ENCODE measurements at regions of chr14 and their contacts with region 1.

Region 1: DNA sequence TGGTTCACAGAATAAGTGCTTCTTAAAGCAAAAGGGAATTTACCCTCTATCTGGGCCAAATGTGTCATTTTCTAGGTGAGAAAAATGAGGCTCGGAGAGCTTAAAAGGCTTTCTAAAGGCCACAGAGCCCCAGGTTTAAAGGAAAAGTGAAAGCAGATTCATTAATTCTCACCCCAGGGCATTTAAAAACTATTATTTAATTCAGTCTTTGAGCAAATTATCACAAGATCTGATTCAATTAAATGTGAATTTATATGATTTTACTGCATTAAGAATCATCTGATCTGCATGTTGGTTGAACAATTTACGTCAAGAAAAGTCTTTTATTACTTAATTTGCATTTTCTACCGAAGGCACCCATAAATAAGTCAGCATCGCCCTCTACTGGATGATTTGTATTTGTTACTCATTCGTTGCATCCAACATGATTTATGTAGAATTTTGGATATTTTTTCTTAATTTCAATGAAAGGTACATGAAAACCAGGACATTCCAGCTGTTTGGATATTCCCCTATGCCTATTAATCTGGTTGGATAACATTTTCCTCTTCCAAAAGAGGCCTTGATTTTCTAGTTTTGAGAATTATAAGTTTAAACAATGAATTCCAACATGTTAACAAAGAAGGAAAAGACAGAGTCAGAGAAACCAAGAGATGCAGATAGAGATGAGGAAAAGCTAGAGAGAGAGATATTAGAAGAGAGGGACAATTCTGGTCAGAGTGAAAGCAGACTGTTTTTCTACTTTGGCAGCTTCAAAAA is 19.1 kb upstream of the DHRS7 start:
- DNase-seq: peak in 6 of 14 experiments; percentile 9 to 87 (median 62)
- ATAC-seq: peak; percentile 71
- H3K4me3 ChIP-seq: peak overlapping the region; percentile 52
- H3K4me3 Mint-ChIP-seq: peak overlapping the region; percentile 75
- H3K27ac ChIP-seq: peak overlapping the region in 1 of 2 donors; percentile 74
- H3K27ac Mint-ChIP-seq: peak overlapping the region; percentile 74
- H3K4me1 ChIP-seq: peaks cover 4% of the 10 kb centered on the region
- H3K4me1 Mint-ChIP-seq: peaks cover 11% of the 10 kb centered on the region
- H3K27me3 ChIP-seq: no peaks in the 10 kb centered on the region
- H3K27me3 Mint-ChIP-seq: no peaks in the 10 kb centered on the region
- CTCF ChIP-seq: peak; percentile 89

Region 2: DNA sequence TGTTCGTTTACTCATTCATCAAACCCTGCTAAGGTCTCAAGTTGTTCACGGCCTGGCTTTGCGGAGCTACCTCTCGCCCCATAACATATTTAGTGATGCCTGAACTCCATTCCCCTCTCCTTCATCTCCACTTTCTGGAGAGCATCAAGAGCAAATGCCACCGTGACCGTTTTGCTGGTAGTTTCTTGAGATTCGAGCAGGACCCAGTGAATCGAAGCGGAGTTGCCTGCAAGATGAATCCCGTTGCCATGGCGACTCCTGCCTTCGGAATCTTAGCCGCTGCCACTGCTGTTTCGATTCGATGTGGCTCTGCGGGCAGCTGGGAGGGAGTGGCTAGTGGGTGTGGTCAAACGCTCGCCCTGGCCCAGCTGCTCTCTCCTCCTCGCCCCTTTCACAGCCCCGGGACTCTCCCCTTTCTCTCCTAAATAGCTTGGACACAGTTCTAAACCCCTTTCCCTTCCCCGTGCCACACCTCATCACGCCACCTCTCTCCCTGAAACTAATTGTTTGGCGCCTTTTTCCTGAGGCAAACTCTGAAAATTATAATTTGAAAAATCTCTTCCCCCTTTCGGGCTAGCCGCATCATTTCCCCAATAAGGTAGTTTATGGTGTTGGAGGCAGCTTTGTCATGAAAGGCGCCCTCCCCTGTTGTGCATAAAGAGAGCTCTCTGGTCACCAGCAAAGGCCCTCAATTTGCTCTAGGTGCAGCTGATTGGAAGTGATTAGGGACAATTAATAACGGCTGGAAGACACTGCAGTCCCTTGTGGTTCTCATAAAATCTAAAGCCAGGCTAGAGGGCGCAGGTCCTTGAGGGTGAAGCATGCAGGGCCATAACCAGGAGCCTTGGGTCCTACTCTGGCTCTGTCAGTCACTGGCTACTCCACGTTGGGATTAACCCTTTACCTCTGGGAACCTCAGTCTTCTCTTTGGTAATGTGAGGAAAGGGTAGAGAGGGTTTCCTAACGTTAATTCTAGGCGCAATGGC is 994.2 kb before region 1 on chr14:
- CTCF ChIA-PET with region 1: no interaction called
- POLR2A ChIA-PET with region 1: no interaction called
- intact Hi-C with region 1: loop called in 1 of 2 experiments (anchors 10 kb)
- DNase-seq: peak; percentile 28 to 91 (median 56)
- ATAC-seq: no peak
- H3K4me3 ChIP-seq: peak overlapping the region; percentile 83
- H3K4me3 Mint-ChIP-seq: peak overlapping the region; percentile 99
- H3K27ac ChIP-seq: peak overlapping the region; percentile 84 to 87
- H3K27ac Mint-ChIP-seq: peak overlapping the region; percentile 94
- H3K4me1 ChIP-seq: peaks cover 20% of the 10 kb centered on the region
- H3K4me1 Mint-ChIP-seq: peaks cover 29% of the 10 kb centered on the region
- H3K27me3 ChIP-seq: no peaks in the 10 kb centered on the region
- H3K27me3 Mint-ChIP-seq: no peaks in the 10 kb centered on the region
- CTCF ChIP-seq: no peak

Region 3: GRCh38 chr14:59507063-59507780 is 677.1 kb before region 1 on chr14:
- CTCF ChIA-PET with region 1: interaction called, 4 read pairs
- POLR2A ChIA-PET with region 1: no interaction called
- intact Hi-C with region 1: loop called (anchors 5 kb)
- DNase-seq: peak in 13 of 14 experiments; percentile 11 to 64 (median 32)
- ATAC-seq: peak; percentile 87
- H3K4me3 ChIP-seq: no peak overlapping the region
- H3K4me3 Mint-ChIP-seq: no peak overlapping the region
- H3K27ac ChIP-seq: no peak overlapping the region
- H3K27ac Mint-ChIP-seq: no peak overlapping the region
- H3K4me1 ChIP-seq: no peaks in the 10 kb centered on the region
- H3K4me1 Mint-ChIP-seq: peaks cover 17% of the 10 kb centered on the region
- H3K27me3 ChIP-seq: peaks cover 3 to 7% of the 10 kb centered on the region in 2 experiments
- H3K27me3 Mint-ChIP-seq: peaks cover 6% of the 10 kb centered on the region
- CTCF ChIP-seq: peak; percentile 71

Region 4: GRCh38 chr14:60064491-60065072 is 119.7 kb before region 1 on chr14:
- CTCF ChIA-PET with region 1: interaction called, 6 read pairs
- POLR2A ChIA-PET with region 1: no interaction called
- intact Hi-C with region 1: loop called (anchors 1 kb)
- DNase-seq: peak in 3 of 14 experiments; percentile 60 to 65 (median 60)
- ATAC-seq: peak; percentile 41
- H3K4me3 ChIP-seq: no peak overlapping the region
- H3K4me3 Mint-ChIP-seq: no peak overlapping the region
- H3K27ac ChIP-seq: no peak overlapping the region
- H3K27ac Mint-ChIP-seq: no peak overlapping the region
- H3K4me1 ChIP-seq: no peaks in the 10 kb centered on the region
- H3K4me1 Mint-ChIP-seq: no peaks in the 10 kb centered on the region
- H3K27me3 ChIP-seq: peaks cover 0 to 3% of the 10 kb centered on the region in 2 experiments
- H3K27me3 Mint-ChIP-seq: peaks cover 18% of the 10 kb centered on the region
- CTCF ChIP-seq: peak; percentile 65

Region 5: DNA sequence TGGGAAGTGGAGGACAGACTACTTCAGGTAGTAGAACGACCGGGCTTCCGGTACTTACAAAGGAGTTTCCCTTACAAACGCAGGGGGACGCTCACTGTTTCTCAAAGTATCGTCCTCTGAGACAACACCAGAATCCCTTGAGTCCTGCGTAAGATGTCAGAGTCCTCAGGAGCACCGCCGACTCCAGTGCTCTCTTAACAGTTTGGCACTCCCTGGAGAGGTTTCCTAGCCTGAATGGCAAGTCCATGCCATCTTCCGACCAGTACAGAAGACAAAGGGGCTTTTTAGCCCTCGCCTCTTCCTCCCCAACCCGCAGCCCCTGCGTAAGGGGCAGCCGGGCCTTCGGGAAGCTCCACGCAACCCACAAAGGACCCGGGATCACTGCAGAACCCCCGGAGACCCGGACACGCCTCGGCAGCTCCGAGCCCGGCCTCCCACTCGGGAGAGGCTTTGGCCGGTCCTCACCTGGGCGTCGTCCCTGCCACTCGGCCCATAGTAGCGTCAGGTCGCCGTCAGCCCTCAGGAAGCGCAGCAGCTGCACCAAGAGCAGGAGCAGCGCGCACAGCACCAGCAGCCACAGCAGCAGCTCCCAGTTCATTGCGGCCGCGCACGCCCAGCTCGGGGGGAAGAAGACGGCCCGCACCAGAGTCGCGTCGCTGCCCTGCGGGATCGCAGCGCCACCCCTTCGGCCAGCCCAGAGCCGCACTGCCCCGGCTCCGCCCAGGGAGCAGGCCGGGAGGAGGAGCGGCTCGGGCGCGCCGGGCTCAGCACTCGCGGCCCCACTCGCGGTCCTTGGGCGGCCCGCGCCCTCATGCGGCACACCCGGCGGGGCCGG is 19.4 kb before region 1 on chr14 and contains the start of gene DHRS7:
- CTCF ChIA-PET with region 1: interaction called, 35 read pairs
- POLR2A ChIA-PET with region 1: interaction called, 17 read pairs
- intact Hi-C with region 1: loop called (anchors 2 kb)
- DNase-seq: peak; percentile 33 to 87 (median 54)
- ATAC-seq: peak; percentile 73
- H3K4me3 ChIP-seq: peak within 1 kb of the TSS; percentile 70
- H3K4me3 Mint-ChIP-seq: peak within 1 kb of the TSS; percentile 96
- H3K27ac ChIP-seq: peak within 1 kb of the TSS; percentile 88 to 90
- H3K27ac Mint-ChIP-seq: peak within 1 kb of the TSS; percentile 97
- H3K4me1 ChIP-seq: peaks cover 32% of the 10 kb centered on the region
- H3K4me1 Mint-ChIP-seq: peaks cover 53% of the 10 kb centered on the region
- H3K27me3 ChIP-seq: no peaks in the 10 kb centered on the region
- H3K27me3 Mint-ChIP-seq: no peaks in the 10 kb centered on the region
- CTCF ChIP-seq: no peak
- total RNA-seq, gene DHRS7: 24.5 to 28.6 TPM

Measured in CD4-positive, alpha-beta T cell (primary cell).